Pancreas (tissue), 10 donors: ENCODE measurements at regions of chr20 and their contacts with region 1.

Region 1: DNA sequence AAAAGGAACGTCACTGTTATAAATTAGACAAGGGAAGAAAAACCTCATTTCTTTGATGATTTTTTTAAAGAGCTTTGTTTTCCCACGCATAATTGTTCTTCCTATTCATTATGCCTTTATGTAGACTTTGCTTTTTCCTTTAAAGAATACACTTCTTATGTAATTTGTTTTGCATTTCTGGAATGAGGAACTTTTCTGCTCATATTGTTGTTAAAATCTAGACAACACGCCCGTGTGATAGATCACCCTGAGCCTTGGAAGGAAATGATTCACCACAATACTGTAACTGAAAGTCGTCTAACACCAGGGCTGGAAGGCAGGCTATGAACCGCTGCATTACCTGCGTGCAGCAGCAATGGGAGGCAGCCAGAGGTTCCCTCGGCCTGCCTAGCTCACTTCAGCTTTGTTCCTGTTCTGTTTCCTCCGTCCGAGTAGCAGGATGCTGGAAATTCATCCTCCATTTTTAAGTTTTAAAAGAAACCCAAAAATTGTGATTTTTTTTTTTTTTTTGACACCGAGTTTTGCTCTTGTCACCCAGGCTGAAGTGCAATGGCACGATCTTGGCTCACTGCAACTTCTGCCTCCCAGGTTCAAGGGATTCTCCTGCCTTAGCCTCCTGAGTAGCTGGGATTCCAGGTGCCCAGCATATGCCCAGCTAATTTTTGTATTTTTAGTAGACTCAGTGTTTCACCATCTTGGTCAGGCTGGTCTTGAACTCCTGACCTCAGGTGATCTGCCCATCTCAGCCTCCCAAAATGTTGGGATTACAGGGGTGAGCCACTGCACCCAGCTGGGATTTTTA is 49.6 kb upstream of the ZNF217 start:
- DNase-seq: peak in 3 of 6 donors; percentile 44 to 62 (median 47)
- ATAC-seq: peak; percentile 65 to 89 (median 80)
- H3K4me3 ChIP-seq: peak overlapping the region in 1 of 4 donors; percentile 2
- H3K27ac ChIP-seq: peak overlapping the region; percentile 76 to 95 (median 90)
- H3K4me1 ChIP-seq: peaks cover 14 to 20% (median 19%) of the 10 kb centered on the region in 3 donors
- H3K27me3 ChIP-seq: no peaks in the 10 kb centered on the region
- CTCF ChIP-seq: no peak

Region 2: DNA sequence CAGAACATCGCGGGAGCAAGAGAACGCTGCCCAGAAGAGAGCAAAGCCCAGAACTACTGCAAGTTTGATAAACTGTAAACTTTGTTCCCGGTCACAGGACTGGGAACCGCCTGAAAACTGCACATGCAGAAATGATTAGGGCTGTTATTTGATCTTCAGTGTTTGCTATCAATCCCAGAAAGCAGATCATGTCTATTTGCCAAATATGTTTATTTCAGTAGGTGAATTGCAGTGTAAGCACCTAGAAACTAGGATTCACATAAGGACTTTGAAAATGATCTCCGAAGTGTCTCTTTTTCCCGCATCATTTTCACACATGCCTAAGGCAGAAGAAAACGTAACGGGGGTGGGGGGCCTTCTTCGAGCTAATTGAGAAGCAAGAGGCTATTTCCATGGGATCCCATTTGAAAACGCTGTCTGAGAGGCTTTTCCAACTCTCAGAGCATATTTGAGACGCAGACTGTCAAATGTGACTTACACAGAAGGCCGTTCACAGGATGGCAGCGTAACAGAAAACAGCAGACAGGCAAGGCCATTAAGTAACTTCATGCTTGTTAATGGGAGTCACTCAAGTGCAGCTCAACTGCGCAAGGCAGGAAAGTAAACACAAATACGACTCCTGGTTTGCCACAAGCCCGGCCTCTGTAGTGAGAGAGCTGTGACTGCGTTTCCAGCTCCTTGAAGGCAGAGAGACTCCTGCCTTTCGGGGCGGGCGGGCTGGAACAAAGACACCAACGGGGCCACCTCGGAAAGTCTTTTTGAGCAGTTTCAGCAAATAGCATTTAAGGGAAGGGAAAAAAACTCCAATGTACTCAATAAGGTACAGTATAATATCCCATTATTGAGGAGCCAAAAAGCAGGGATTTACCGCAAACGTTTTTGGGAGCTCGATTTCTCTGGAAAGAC is 95.1 kb after region 1 on chr20:
- intact Hi-C with region 1: loop called in 1 of 3 experiments (anchors 10 kb)
- DNase-seq: peak; percentile 69 to 83 (median 80)
- ATAC-seq: peak; percentile 83 to 89 (median 84)
- H3K4me3 ChIP-seq: peak overlapping the region in 2 of 4 donors; percentile 23 to 30
- H3K27ac ChIP-seq: peak overlapping the region; percentile 65 to 95 (median 80)
- H3K4me1 ChIP-seq: peaks cover 16 to 52% (median 38%) of the 10 kb centered on the region in 3 donors
- H3K27me3 ChIP-seq: no peaks in the 10 kb centered on the region
- CTCF ChIP-seq: no peak

Region 3: DNA sequence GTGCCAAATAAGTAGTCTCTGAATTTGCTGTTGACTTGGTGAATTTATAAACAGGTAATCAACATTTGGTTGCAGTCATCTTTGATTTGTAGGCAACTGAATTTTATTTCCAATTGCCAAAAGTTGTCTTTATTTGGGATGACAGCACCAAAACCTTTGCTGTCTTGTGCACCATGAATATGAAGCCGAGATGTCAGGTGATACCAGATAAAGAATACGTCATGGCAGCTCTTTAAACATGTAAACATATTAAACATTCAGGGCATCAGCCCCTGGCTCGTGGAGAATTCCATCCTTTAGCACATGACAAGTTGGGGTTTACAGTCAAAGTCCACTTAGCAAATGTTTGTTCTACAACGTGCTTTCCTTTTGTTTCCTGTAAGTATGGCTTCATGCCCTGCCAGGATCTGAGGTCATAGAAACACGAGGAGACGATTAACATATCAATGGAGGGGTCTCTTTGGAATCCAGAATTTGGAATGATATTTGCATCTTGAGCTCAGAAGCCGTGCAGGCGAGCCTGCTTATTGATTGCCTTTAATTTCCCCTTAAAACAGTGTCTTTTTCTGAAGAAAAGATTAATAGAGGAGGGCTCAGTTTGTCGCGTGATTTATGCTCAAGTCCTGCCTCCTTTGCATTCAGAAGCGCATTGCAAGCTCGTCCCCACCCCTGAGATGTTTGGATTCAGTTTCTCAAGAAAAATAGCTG is 120.6 kb after region 1 on chr20:
- intact Hi-C with region 1: no loop called
- DNase-seq: peak in 3 of 6 donors; percentile 61 to 77 (median 74)
- ATAC-seq: peak; percentile 83 to 97 (median 94)
- H3K4me3 ChIP-seq: peak overlapping the region in 2 of 4 donors; percentile 21 to 26
- H3K27ac ChIP-seq: peak overlapping the region; percentile 6 to 81 (median 46)
- H3K4me1 ChIP-seq: peaks cover 0 to 19% (median 14%) of the 10 kb centered on the region in 3 donors
- H3K27me3 ChIP-seq: no peaks in the 10 kb centered on the region
- CTCF ChIP-seq: no peak

Region 4: DNA sequence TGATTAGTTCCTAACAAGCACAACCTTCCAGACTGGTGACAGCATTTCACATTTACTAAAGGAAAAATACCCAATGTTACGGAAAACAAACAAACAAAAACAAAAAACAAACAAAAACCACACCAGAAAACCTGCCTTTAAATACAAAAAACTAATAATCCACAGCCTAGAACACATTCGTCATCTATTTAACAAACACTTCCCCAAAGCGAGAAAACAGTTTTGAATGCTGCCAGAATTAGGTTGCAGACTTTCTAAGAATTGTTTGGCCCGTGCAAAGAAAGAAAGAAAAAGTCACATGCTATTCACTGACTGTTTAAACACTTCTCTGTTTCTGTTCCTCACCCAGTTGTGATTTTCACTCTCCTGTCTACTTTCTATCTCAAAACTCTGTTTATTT is 374.6 kb after region 1 on chr20:
- intact Hi-C with region 1: no loop called
- DNase-seq: no peak
- ATAC-seq: peak in 2 of 4 donors; percentile 51 to 52
- H3K4me3 ChIP-seq: no peak overlapping the region
- H3K27ac ChIP-seq: no peak overlapping the region
- H3K4me1 ChIP-seq: no peaks in the 10 kb centered on the region
- H3K27me3 ChIP-seq: peaks cover 0 to 3% (median 0%) of the 10 kb centered on the region in 4 donors
- CTCF ChIP-seq: no peak